Natural killer cell (primary cell): ENCODE measurements at regions of chr3 and their contacts with region 1.

Region 1: DNA sequence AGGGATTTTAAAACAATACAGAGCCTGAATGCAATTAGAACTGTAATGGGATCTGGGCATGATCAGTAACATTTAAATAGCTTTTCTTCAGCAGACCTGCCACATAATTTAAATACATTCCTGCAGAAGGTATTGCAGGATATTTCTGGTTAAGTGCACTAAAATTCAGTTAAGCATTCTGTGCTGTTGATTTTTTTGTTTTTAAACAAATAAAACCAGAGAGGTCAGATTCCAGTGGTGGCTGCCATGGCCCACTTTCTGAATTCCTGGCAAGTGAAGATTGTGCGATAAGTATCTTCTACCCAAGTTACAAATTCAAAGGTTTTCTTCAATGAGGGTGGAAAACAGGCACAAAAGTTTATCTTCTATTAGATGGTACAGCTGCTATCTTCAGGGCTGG is 98.7 kb downstream of the RAP2B start:
- DNase-seq: no peak
- ATAC-seq: no peak
- H3K4me3 ChIP-seq: no peak overlapping the region
- H3K4me3 Mint-ChIP-seq: no peak overlapping the region
- H3K27ac ChIP-seq: no peak overlapping the region
- H3K27ac Mint-ChIP-seq: no peak overlapping the region
- H3K4me1 ChIP-seq: no peaks in the 10 kb centered on the region
- H3K4me1 Mint-ChIP-seq: peaks cover 39 to 41% of the 10 kb centered on the region in 2 donors
- H3K27me3 ChIP-seq: no peaks in the 10 kb centered on the region
- H3K27me3 Mint-ChIP-seq: no peaks in the 10 kb centered on the region
- CTCF ChIP-seq: no peak

Region 2: DNA sequence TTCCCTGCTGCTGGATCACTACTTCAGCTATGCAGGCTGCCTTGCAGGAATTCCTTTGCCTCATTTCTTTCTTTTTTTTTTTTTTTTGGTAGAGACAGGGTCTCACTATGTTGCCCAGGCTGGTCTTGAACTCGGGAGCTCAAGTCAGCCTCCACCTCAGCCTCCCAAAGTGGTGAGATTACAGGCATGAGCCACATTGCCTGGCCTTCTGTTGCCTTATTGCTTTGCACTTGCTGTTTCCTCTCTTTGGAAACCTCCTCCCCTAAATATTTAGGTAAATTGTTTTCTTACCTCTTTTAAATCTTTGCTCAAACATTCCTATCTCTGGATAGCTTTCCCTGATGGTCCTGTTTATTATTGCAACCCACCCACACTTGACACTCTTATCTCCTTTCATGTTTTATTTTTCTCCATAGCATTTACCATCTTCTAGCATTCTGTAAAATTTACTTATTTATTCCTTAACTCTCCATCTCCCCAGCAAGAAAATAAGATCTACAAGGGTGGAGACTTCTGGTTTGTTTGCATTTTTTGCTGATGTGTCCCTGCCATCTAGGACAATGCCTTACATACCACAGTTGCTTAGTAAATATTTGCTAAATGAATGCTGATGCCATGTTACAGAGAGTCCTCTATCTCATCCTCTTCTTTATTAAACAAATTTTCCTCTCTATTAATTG is 291.0 kb before region 1 on chr3:
- intact Hi-C with region 1: no loop called
- DNase-seq: no peak
- ATAC-seq: no peak
- H3K4me3 ChIP-seq: no peak overlapping the region
- H3K4me3 Mint-ChIP-seq: no peak overlapping the region
- H3K27ac ChIP-seq: no peak overlapping the region
- H3K27ac Mint-ChIP-seq: no peak overlapping the region
- H3K4me1 ChIP-seq: no peaks in the 10 kb centered on the region
- H3K4me1 Mint-ChIP-seq: no peaks in the 10 kb centered on the region
- H3K27me3 ChIP-seq: no peaks in the 10 kb centered on the region
- H3K27me3 Mint-ChIP-seq: no peaks in the 10 kb centered on the region
- CTCF ChIP-seq: no peak

Region 3: DNA sequence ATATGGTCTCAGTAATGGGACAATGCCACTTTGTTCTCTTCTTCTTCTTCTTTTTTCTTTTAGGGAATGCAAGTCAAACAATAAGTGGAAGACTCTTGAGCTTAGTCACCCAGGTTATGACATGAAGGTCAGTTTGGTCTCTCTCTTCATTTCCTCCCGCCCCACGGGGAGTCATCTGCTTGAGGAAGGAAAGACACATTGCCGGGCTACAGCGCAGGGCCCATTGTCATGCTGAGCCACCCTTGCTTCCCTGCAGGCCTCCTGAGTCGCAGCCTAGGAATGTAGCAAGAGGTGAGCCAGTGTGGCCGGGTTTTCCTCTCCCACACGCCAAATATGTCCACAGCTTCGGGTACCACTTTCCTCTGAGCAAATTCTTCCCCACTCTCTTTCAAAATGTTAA is 51.1 kb before region 1 on chr3:
- intact Hi-C with region 1: loop called (anchors 10 kb)
- DNase-seq: peak in 1 of 2 donors; percentile 33
- ATAC-seq: peak in 2 of 3 donors; percentile 22 to 46
- H3K4me3 ChIP-seq: no peak overlapping the region
- H3K4me3 Mint-ChIP-seq: no peak overlapping the region
- H3K27ac ChIP-seq: no peak overlapping the region
- H3K27ac Mint-ChIP-seq: peak overlapping the region; percentile 46 to 78
- H3K4me1 ChIP-seq: peaks cover 16% of the 10 kb centered on the region
- H3K4me1 Mint-ChIP-seq: peaks cover 33 to 35% of the 10 kb centered on the region in 2 donors
- H3K27me3 ChIP-seq: no peaks in the 10 kb centered on the region
- H3K27me3 Mint-ChIP-seq: no peaks in the 10 kb centered on the region
- CTCF ChIP-seq: no peak